GM12878 (cell line): ENCODE measurements at regions of chr10 and their contacts with region 1.

Region 1: DNA sequence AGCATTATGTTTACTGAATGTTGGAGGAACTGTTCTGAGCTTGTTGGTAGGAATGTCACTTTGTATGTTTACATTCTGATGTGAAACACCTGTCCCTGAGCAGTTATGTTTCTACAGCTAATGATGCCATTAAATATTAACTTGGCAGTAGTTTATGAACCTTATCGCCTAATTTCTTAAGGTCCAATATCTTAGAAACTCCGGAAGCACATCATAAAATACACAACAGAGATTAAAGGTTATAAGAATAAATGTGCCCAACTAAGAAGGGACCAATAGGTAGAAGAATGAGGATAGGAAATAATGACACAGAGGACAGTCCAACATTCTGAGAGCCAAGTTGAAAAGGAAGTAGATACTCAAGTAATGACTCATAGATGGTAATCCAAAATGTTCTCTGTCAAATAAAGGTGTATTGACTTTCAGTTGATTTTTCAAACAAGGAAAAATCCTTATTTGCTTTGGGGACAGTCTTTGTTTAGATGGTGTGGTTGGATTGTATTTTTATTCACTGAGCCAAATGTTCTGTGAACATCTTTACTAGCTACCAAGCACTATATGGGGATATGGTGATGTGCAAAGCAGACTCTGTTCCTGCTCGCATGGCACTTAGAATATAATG is 31.9 kb downstream of the LCOR start:
- DNase-seq: peak; percentile 40
- ATAC-seq: peak; percentile 81
- H3K4me3 ChIP-seq: no peak overlapping the region
- H3K27ac ChIP-seq: peak overlapping the region; percentile 20
- H3K4me1 ChIP-seq: peaks cover 38% of the 10 kb centered on the region
- H3K27me3 ChIP-seq: no peaks in the 10 kb centered on the region
- CTCF ChIP-seq: no peak
- EP300 ChIP-seq: no peak
- POLR2A ChIP-seq: no peak
- RAD21 ChIP-seq: no peak

Region 2: DNA sequence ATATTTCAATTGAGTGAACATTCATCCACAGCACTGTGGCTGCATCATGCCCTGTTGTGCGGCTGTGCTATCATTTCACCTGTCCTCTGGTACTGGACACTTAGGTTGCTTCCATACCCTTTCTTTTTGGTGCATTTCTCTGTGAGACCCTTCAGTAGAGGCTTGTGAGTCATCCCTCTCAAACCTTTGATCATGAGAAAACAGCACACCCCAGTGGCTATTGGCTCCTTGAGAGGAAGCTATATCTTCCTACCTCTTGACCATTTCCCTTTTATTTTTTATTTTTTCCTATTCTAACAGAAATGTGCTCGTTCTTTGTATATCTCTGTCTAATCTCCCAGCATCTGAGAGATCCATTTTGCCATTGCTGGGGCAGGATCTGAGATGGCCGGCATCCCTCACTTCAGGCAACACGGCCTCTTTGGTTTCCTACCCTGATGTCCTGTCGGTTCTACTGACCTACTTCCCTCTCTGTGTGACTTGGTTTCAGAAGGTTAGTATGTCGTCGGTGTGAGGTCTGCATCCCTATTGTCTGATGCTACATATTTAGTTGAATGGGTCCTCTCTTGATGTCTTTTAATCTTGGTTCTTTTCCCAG is 119.9 kb before region 1 on chr10:
- CTCF ChIA-PET with region 1: no interaction called
- POLR2A ChIA-PET with region 1: no interaction called
- RAD21 ChIA-PET with region 1: no interaction called
- SMC1A ChIA-PET with region 1: no interaction called
- in situ Hi-C with region 1: no loop called
- intact Hi-C with region 1: no loop called
- DNase-seq: no peak
- ATAC-seq: peak; percentile 61
- H3K4me3 ChIP-seq: no peak overlapping the region
- H3K27ac ChIP-seq: no peak overlapping the region
- H3K4me1 ChIP-seq: peaks cover 25% of the 10 kb centered on the region
- H3K27me3 ChIP-seq: no peaks in the 10 kb centered on the region
- CTCF ChIP-seq: peak; percentile 21 to 60 (median 38); a peak in 4 of 6 replicates
- EP300 ChIP-seq: no peak
- POLR2A ChIP-seq: no peak
- RAD21 ChIP-seq: peak; percentile 57

Region 3: DNA sequence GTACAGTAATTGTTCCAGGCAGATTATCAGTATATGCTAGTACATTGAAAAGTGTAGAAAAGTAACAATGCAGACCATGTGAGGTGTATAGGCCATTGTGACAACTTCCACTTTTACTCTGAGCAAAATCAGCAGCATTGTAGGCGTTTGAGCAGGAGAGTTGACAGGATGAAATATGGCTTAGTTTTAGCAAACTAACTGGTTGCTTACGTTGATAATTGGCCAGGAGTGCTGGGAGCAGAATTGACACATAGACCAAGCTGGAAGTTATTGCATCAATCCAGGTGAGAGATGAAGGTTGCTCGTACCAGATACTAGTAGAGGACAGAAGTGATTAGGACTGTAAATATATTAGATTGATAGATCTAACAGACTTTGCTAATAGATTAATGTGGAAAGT is 14.0 kb after region 1 on chr10:
- CTCF ChIA-PET with region 1: interaction called, 5 read pairs
- POLR2A ChIA-PET with region 1: interaction called, 4 read pairs
- RAD21 ChIA-PET with region 1: no interaction called
- SMC1A ChIA-PET with region 1: interaction called, 18 read pairs
- in situ Hi-C with region 1: no loop called
- intact Hi-C with region 1: no loop called
- DNase-seq: no peak
- ATAC-seq: no peak
- H3K4me3 ChIP-seq: no peak overlapping the region
- H3K27ac ChIP-seq: no peak overlapping the region
- H3K4me1 ChIP-seq: no peaks in the 10 kb centered on the region; the same call in 1 of the 2 replicates
- H3K27me3 ChIP-seq: no peaks in the 10 kb centered on the region
- CTCF ChIP-seq: no peak
- EP300 ChIP-seq: no peak
- POLR2A ChIP-seq: no peak
- RAD21 ChIP-seq: no peak

Region 4: DNA sequence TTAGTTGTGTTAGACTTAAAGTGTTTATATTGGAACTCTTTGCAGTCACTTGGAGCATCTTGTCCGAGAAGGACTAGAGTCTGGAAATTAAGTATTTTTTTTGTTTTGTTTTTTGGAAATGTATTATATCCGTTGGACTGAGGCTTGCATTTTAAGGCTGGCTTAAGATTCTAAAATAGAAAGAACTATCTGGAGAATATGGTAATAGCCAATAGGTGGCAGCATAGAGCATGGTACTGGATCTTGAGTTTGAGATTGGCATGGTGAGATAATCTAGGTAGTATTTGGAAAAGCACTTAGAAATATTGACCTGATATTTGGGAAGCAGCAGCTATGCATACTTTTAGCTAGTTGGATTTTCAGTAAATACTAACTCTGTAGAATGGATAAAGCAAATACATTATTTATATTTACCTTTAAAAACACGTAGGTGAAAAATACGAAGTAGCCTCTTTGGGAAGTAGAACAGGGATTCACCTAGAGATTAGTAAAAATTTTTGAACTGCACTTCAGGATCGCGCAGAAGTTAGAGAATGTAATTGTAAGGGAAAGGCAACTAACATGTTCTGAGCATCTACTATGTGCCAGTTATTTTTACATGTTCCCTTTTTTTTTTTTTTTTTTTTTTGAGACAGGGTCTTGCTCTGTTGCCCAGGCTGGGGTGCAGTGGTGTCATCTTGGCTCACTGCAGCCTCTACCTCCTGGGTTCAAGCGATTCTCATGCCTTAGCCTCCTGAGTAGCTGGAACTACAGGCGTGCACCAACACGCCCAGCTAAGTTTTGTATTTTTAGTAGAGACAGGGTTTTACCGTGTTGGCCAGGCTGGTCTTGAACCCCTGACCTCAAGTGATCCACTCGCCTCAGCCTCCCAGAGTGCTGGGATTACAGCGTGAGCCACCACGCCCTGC is 46.7 kb after region 1 on chr10:
- CTCF ChIA-PET with region 1: interaction called, 8 read pairs
- POLR2A ChIA-PET with region 1: interaction called, 3 read pairs
- RAD21 ChIA-PET with region 1: interaction called, 6 read pairs
- SMC1A ChIA-PET with region 1: interaction called, 6 read pairs
- in situ Hi-C with region 1: no loop called
- intact Hi-C with region 1: loop called (anchors 5 kb)
- DNase-seq: peak; percentile 28
- ATAC-seq: peak; percentile 84
- H3K4me3 ChIP-seq: no peak overlapping the region
- H3K27ac ChIP-seq: peak overlapping the region; percentile 24; the same call in 1 of the 2 replicates
- H3K4me1 ChIP-seq: 0 out of 2 replicates have a peak, but pooled peaks cover 3% of the 10 kb centered on the region
- H3K27me3 ChIP-seq: no peaks in the 10 kb centered on the region
- CTCF ChIP-seq: peak; percentile 65 to 67 (median 66)
- EP300 ChIP-seq: no peak
- POLR2A ChIP-seq: no peak
- RAD21 ChIP-seq: peak; percentile 69

Region 5: DNA sequence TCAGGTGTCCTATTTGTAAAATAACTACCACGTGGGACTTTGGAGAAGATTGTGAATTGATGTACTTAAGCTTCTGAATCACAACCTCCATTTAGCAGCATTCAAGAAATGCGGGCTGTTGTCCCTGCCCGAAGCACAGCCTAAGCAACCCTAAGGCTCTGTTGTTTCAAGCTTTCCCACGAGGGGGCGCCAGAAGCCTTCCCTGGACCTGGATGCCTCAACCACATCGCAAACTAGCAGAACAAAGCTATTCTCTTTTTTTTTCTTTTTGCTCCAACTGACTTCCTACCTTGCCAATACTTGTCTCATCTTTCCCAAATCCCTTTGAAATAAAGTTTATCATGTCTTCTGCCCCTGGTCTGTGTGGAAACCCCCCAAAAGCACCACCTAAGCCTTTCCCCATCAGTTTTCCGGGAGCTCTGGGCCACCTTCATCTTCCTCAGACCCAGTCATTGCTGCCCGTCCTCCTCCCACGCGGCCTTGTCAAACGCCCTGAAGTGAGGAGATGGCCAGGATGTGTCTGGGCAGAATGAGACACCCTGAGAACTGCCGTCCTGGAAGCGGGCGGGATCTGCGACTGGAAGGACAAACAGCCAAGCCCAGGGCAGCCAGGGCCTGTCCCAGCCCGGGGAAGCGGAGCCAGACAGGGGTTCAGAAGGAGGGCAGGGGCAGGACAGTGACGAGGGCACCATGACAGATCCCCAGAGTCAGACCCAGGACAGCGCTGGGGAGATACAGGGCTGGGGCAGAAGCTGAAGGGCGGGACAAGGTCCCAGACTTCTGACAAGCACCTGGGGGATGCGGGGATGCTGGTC is 209.0 kb after region 1 on chr10:
- CTCF ChIA-PET with region 1: no interaction called
- POLR2A ChIA-PET with region 1: no interaction called
- RAD21 ChIA-PET with region 1: no interaction called
- SMC1A ChIA-PET with region 1: no interaction called
- in situ Hi-C with region 1: no loop called
- intact Hi-C with region 1: no loop called
- DNase-seq: peak; percentile 13
- ATAC-seq: peak; percentile 94
- H3K4me3 ChIP-seq: no peak overlapping the region
- H3K27ac ChIP-seq: no peak overlapping the region
- H3K4me1 ChIP-seq: no peaks in the 10 kb centered on the region
- H3K27me3 ChIP-seq: peaks cover 0 to 4% of the 10 kb centered on the region in 2 experiments; a peak in 2 of 4 replicates
- CTCF ChIP-seq: peak; percentile 94 to 96 (median 95)
- EP300 ChIP-seq: no peak
- POLR2A ChIP-seq: no peak
- RAD21 ChIP-seq: peak; percentile 97